Posterior vena cava (tissue), 2 donors: ENCODE measurements at regions of chrX and their contacts with region 1.

Region 1: GRCh38 chrX:9614017-9614416 is 149.2 kb downstream of the TBL1X start:
- DNase-seq: no peak

Region 2: GRCh38 chrX:9429781-9430180 is 184.2 kb before region 1 on chrX:
- intact Hi-C with region 1: no loop called
- DNase-seq: no peak

Region 3: GRCh38 chrX:9665113-9665512 is 51.1 kb after region 1 on chrX:
- intact Hi-C with region 1: loop called in 1 of 2 experiments (anchors 1 kb)
- DNase-seq: no peak